Heart right ventricle (tissue), 16 donors: ENCODE measurements at regions of chr1 and their contacts with region 1.

Region 1: DNA sequence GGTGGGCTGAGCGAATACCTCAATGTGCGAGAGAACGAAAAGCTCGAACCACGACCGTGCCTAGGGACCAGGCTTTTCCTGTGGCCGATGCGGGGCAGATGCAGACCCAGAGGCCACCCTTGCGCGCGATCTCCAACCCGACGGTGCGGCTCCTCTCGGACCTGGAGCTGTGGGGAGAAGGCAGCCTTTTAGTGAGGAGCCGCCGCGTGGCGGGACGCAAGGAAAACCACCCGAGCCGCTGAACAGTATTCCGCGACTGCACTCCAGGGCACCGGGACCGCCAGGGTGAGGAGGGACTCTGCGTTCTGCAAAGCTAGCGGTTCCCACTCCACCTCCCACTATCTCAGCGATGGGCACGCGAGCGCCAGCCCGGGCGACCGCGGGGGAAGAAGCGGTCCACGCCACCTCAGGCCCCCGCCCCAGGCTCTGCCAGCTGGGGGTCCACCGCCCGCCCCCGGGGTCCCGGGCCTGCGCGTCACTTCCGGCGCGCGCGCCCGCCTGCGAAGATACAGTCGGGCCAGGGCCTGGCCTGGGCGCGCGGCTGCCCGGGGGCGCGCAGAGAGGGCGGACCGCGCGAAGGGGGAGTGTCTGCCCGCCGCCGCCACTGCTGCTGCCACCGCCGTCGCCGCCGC is 66.5 kb upstream of the PRKACB start:
- DNase-seq: peak; percentile 60 to 77
- ATAC-seq: peak; percentile 97 to 100 (median 97)
- H3K4me3 ChIP-seq: peak overlapping the region; percentile 57 to 91 (median 86)
- H3K27ac ChIP-seq: peak overlapping the region; percentile 23 to 91 (median 88)
- H3K4me1 ChIP-seq: peaks cover 0 to 29% (median 6%) of the 10 kb centered on the region in 9 donors
- H3K27me3 ChIP-seq: peaks cover 0 to 12% (median 0%) of the 10 kb centered on the region in 7 donors
- CTCF ChIP-seq: peak in 3 of 9 donors; percentile 17 to 30 (median 20)

Region 2: DNA sequence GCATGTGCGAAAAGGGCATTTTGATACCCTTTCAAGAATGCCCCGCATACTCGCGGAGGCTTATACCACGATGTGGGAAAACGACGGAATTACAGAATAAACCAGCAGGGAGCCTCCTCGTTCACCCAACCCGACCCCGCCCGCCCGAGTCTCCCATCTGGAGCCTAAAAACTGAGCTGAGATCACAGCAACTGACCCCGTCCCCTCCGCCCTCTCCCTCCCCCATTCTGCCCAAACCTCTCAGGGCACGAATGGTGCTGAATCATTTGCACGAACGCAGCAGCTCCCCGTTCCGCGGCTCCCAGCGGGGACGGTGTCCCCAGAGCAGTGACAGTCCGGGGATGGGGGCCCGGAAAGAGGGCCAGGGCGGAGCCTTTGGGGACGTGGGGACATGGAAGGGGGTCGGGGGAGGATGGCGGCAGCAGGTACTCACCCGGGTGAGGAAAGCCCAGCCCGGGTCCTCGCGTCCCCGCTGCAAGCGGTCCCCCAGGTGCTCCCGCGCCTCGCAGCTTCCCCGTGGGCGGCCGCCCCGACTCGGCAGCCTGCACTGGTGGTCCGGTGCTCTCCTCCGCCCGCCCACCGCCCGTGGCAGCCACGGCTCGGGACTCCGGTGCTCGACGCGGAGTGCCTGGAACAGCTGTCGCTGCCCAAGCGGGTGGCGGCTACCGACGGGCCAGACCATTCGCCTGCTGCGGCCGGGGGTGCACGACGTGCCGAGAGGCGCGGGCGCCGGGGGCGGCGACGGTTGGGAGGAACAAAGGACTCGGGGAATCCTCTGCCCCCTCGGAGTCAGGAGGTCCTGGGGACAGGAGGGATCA is 78.9 kb before region 1 on chr1 and contains the start of gene TTLL7:
- intact Hi-C with region 1: loop called in 1 of 10 experiments (anchors 10 kb)
- DNase-seq: peak; percentile 79 to 83
- ATAC-seq: peak; percentile 93 to 98 (median 95)
- H3K4me3 ChIP-seq: peak within 1 kb of the TSS; percentile 63 to 93 (median 84)
- H3K27ac ChIP-seq: peak within 1 kb of the TSS in 9 of 10 donors; percentile 61 to 86 (median 80)
- H3K4me1 ChIP-seq: peaks cover 0 to 32% (median 3%) of the 10 kb centered on the region in 9 donors
- H3K27me3 ChIP-seq: peaks cover 0 to 44% (median 7%) of the 10 kb centered on the region in 7 donors
- CTCF ChIP-seq: no peak
- total RNA-seq, gene TTLL7: 2.1 to 12.1 (median 3.7) TPM

Region 3: GRCh38 chr1:84122780-84123382 is 45.3 kb after region 1 on chr1:
- intact Hi-C with region 1: loop called in 1 of 10 experiments (anchors 5 kb)
- DNase-seq: peak in 1 of 2 donors; percentile 13
- ATAC-seq: peak in 7 of 8 donors; percentile 42 to 67 (median 51)
- H3K4me3 ChIP-seq: no peak overlapping the region
- H3K27ac ChIP-seq: no peak overlapping the region
- H3K4me1 ChIP-seq: peaks cover 0 to 10% (median 0%) of the 10 kb centered on the region in 9 donors
- H3K27me3 ChIP-seq: no peaks in the 10 kb centered on the region
- CTCF ChIP-seq: peak; percentile 24 to 76 (median 68)